Activated CD4-positive, alpha-beta memory T cell treated with anti-CD3 and anti-CD28 coated beads, Interleukin-2, amount 10 ng/mL, durations not matched to agents 7 days and 5 days (primary cell): ENCODE measurements at regions of chr3 and their contacts with region 1.

Region 1: GRCh38 chr3:197736491-197737318 is at the start of gene RUBCN:
- DNase-seq: peak; percentile 95
- H3K4me3 Mint-ChIP-seq: peak within 1 kb of the TSS; percentile 92
- H3K27ac Mint-ChIP-seq: peak within 1 kb of the TSS; percentile 92
- H3K4me1 Mint-ChIP-seq: peaks cover 41% of the 10 kb centered on the region
- H3K27me3 Mint-ChIP-seq: no peaks in the 10 kb centered on the region
- total RNA-seq, gene RUBCN: 46.8 to 47.4 TPM

Region 2: GRCh38 chr3:197711973-197712707 is 24.6 kb before region 1 on chr3:
- CTCF ChIA-PET with region 1: interaction called, 8 read pairs
- POLR2A ChIA-PET with region 1: interaction called, 37 read pairs
- DNase-seq: peak; percentile 90
- H3K4me3 Mint-ChIP-seq: peak overlapping the region; percentile 74
- H3K27ac Mint-ChIP-seq: peak overlapping the region; percentile 98
- H3K4me1 Mint-ChIP-seq: peaks cover 41% of the 10 kb centered on the region
- H3K27me3 Mint-ChIP-seq: no peaks in the 10 kb centered on the region